Calu3 (cell line): ENCODE measurements at regions of chr5 and their contacts with region 1.

Region 1: GRCh38 chr5:124570285-124571035 is 176.0 kb downstream of the ZNF608 start:
- DNase-seq: no peak
- H3K4me3 Mint-ChIP-seq: no peak overlapping the region
- H3K27ac Mint-ChIP-seq: no peak overlapping the region
- H3K4me1 Mint-ChIP-seq: no peaks in the 10 kb centered on the region
- H3K27me3 Mint-ChIP-seq: no peaks in the 10 kb centered on the region
- CTCF ChIP-seq: no peak

Region 2: GRCh38 chr5:124583469-124584350 is 13.2 kb after region 1 on chr5:
- CTCF ChIA-PET with region 1: interaction called, 12 read pairs
- intact Hi-C with region 1: no loop called
- DNase-seq: peak; percentile 51
- H3K4me3 Mint-ChIP-seq: no peak overlapping the region
- H3K27ac Mint-ChIP-seq: peak overlapping the region; percentile 24
- H3K4me1 Mint-ChIP-seq: peaks cover 45% of the 10 kb centered on the region
- H3K27me3 Mint-ChIP-seq: no peaks in the 10 kb centered on the region
- CTCF ChIP-seq: no peak